Naive thymus-derived CD4-positive, alpha-beta T cell (primary cell): ENCODE measurements at regions of chr11 and their contacts with region 1.

Region 1: GRCh38 chr11:126062679-126063506 is at the start of gene CDON:
- DNase-seq: peak; percentile 88 to 97 (median 93)
- ATAC-seq: peak; percentile 92
- H3K4me3 ChIP-seq: peak within 1 kb of the TSS; percentile 83
- H3K4me3 Mint-ChIP-seq: peak within 1 kb of the TSS; percentile 79 to 93 (median 92)
- H3K27ac ChIP-seq: peak within 1 kb of the TSS; percentile 76
- H3K27ac Mint-ChIP-seq: peak within 1 kb of the TSS; percentile 79 to 98 (median 97)
- H3K4me1 ChIP-seq: peaks cover 4 to 5% of the 10 kb centered on the region in 2 donors
- H3K4me1 Mint-ChIP-seq: peaks cover 5 to 17% (median 7%) of the 10 kb centered on the region in 7 donors
- H3K27me3 ChIP-seq: no peaks in the 10 kb centered on the region
- H3K27me3 Mint-ChIP-seq: peaks cover 0 to 56% (median 5%) of the 10 kb centered on the region in 5 donors
- total RNA-seq, gene CDON: 1.5 to 4.8 (median 2.3) TPM

Region 2: GRCh38 chr11:124622531-124623451 is 1440.1 kb before region 1 on chr11 and contains the start of gene TBRG1:
- CTCF ChIA-PET with region 1: no interaction called
- POLR2A ChIA-PET with region 1: no interaction called
- intact Hi-C with region 1: loop called (anchors 1 to 5 kb)
- DNase-seq: peak; percentile 58 to 87 (median 81)
- ATAC-seq: peak; percentile 96
- H3K4me3 ChIP-seq: peak within 1 kb of the TSS; percentile 75
- H3K4me3 Mint-ChIP-seq: peak within 1 kb of the TSS; percentile 89 to 100 (median 98)
- H3K27ac ChIP-seq: peak within 1 kb of the TSS; percentile 91
- H3K27ac Mint-ChIP-seq: peak within 1 kb of the TSS; percentile 91 to 100 (median 98)
- H3K4me1 ChIP-seq: peaks cover 7 to 12% of the 10 kb centered on the region in 2 donors
- H3K4me1 Mint-ChIP-seq: peaks cover 21 to 52% (median 46%) of the 10 kb centered on the region in 7 donors
- H3K27me3 ChIP-seq: no peaks in the 10 kb centered on the region
- H3K27me3 Mint-ChIP-seq: peaks cover 0 to 23% (median 7%) of the 10 kb centered on the region in 5 donors
- total RNA-seq, gene TBRG1: 35.5 to 78.6 (median 63.9) TPM

Region 3: DNA sequence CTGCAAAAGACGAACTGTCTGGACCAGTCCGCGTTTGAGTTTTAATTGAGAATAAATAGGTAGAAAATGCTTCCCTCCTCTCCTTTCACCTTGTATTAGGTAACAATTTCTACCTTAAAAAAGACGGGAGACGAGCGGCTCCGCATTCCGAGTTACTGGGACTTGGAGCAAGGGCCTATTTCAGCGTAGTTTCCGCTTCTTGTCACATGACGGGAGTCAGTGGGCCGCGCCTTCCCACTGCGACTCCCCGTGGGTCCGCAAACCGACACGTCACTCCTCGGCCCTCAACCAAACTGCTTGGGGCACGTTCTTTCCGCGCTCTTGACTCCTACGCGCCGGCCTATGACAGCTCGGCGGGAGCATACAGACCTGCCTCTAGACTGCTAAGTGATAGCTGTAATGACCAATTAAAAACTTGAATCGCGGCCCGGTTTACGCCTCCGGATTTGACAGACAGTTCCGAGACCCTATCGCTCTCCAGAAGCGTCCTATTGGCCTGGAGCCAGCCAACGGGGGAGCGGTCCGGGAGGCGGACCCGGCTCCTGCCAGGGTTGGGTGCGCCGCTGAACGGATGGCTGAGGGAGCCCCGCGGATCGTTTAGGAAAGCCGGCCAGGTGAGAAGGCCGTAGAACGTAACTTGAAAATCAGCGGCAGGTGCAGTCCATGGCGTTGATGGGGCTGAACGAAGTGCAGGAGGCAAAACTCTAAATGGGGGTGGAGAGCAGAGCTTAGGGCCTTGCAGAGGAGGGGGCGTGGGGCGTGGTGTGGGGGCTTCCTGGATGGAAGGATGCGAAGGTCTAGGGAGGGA is 470.4 kb before region 1 on chr11 and contains the start of gene STT3A:
- CTCF ChIA-PET with region 1: no interaction called
- POLR2A ChIA-PET with region 1: no interaction called
- intact Hi-C with region 1: loop called (anchors 1 kb)
- DNase-seq: peak; percentile 94 to 99 (median 99)
- ATAC-seq: peak; percentile 96
- H3K4me3 ChIP-seq: peak within 1 kb of the TSS; percentile 94
- H3K4me3 Mint-ChIP-seq: peak within 1 kb of the TSS; percentile 88 to 99 (median 96)
- H3K27ac ChIP-seq: peak within 1 kb of the TSS; percentile 95
- H3K27ac Mint-ChIP-seq: peak within 1 kb of the TSS; percentile 94 to 100 (median 99)
- H3K4me1 ChIP-seq: peaks cover 13% of the 10 kb centered on the region in 2 donors
- H3K4me1 Mint-ChIP-seq: peaks cover 30 to 62% (median 53%) of the 10 kb centered on the region in 7 donors
- H3K27me3 ChIP-seq: no peaks in the 10 kb centered on the region
- H3K27me3 Mint-ChIP-seq: no peaks in the 10 kb centered on the region
- total RNA-seq, gene STT3A: 39.6 to 153 (median 84.5) TPM

Region 4: GRCh38 chr11:125902927-125903710 is 159.8 kb before region 1 on chr11 and contains the start of gene PUS3:
- CTCF ChIA-PET with region 1: no interaction called
- POLR2A ChIA-PET with region 1: no interaction called
- intact Hi-C with region 1: loop called (anchors 1 kb)
- DNase-seq: peak; percentile 73 to 88 (median 83)
- ATAC-seq: peak; percentile 96
- H3K4me3 ChIP-seq: peak within 1 kb of the TSS; percentile 91
- H3K4me3 Mint-ChIP-seq: peak within 1 kb of the TSS; percentile 82 to 98 (median 96)
- H3K27ac ChIP-seq: peak within 1 kb of the TSS; percentile 86
- H3K27ac Mint-ChIP-seq: peak within 1 kb of the TSS; percentile 83 to 96 (median 92)
- H3K4me1 ChIP-seq: peaks cover 7 to 13% of the 10 kb centered on the region in 2 donors
- H3K4me1 Mint-ChIP-seq: peaks cover 21 to 54% (median 39%) of the 10 kb centered on the region in 7 donors
- H3K27me3 ChIP-seq: peaks cover 0 to 4% of the 10 kb centered on the region in 2 donors
- H3K27me3 Mint-ChIP-seq: peaks cover 18 to 40% (median 29%) of the 10 kb centered on the region in 5 donors
- total RNA-seq, gene PUS3: 4.6 to 15.3 (median 9.3) TPM

Region 5: GRCh38 chr11:126080161-126080941 is 17.5 kb after region 1 on chr11:
- CTCF ChIA-PET with region 1: interaction called, 5 read pairs
- POLR2A ChIA-PET with region 1: interaction called, 21 read pairs
- intact Hi-C with region 1: loop called (anchors 1 kb)
- DNase-seq: no peak
- ATAC-seq: no peak
- H3K4me3 ChIP-seq: no peak overlapping the region
- H3K4me3 Mint-ChIP-seq: no peak overlapping the region
- H3K27ac ChIP-seq: no peak overlapping the region
- H3K27ac Mint-ChIP-seq: peak overlapping the region in 1 of 9 donors; percentile 6
- H3K4me1 ChIP-seq: peaks cover 11 to 25% of the 10 kb centered on the region in 2 donors
- H3K4me1 Mint-ChIP-seq: peaks cover 16 to 27% (median 23%) of the 10 kb centered on the region in 7 donors
- H3K27me3 ChIP-seq: no peaks in the 10 kb centered on the region
- H3K27me3 Mint-ChIP-seq: no peaks in the 10 kb centered on the region

Region 6: GRCh38 chr11:126095745-126096144 is 32.9 kb after region 1 on chr11:
- CTCF ChIA-PET with region 1: no interaction called
- POLR2A ChIA-PET with region 1: no interaction called
- intact Hi-C with region 1: no loop called
- DNase-seq: no peak
- ATAC-seq: no peak
- H3K4me3 ChIP-seq: no peak overlapping the region
- H3K4me3 Mint-ChIP-seq: no peak overlapping the region
- H3K27ac ChIP-seq: no peak overlapping the region
- H3K27ac Mint-ChIP-seq: no peak overlapping the region
- H3K4me1 ChIP-seq: no peaks in the 10 kb centered on the region
- H3K4me1 Mint-ChIP-seq: peaks cover 0 to 2% (median 0%) of the 10 kb centered on the region in 7 donors
- H3K27me3 ChIP-seq: no peaks in the 10 kb centered on the region
- H3K27me3 Mint-ChIP-seq: peaks cover 0 to 11% (median 0%) of the 10 kb centered on the region in 5 donors

Region 7: DNA sequence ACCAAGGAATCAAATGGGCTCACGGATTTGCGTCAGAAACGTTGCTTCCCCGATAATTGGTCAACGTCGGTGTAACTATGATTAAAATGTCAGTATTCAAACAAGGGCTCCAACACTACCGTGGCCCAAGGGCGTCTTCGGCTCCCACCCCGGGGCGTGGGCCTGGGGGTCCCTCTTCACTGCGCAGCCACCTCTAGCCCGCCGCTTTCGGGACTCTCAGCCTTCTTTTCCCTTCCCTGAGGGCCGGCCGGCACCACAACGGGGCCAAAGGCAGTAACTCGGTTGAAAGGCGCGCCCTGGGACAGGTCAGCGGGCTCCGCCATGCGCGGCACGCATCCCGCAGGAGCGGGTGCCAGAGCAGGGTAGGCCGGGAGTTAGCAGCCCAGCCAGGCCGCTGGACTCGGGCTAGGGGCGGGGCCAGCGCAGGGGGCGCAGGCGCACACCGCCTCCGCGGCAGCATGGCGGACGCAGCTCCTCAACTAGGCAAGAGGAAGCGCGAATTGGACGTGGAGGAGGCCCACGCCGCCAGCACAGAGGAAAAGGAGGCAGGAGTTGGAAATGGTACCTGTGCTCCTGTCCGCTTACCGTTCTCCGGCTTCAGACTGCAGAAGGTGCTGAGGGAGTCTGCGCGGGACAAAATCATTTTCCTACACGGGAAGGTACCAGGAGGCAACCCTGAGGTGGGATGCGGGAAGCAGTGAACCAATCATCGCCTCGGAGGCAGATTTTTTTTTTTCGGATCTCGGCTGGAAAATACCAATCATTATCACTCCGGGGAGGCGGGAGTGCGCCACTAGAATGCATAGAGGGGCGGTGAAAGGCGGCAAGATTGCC is 240.9 kb after region 1 on chr11 and contains the start of gene DCPS:
- CTCF ChIA-PET with region 1: no interaction called
- POLR2A ChIA-PET with region 1: no interaction called
- intact Hi-C with region 1: loop called in 1 of 2 experiments (anchors 1 kb)
- DNase-seq: peak; percentile 78 to 94 (median 86)
- ATAC-seq: peak; percentile 99
- H3K4me3 ChIP-seq: peak within 1 kb of the TSS; percentile 100
- H3K4me3 Mint-ChIP-seq: peak within 1 kb of the TSS; percentile 91 to 99 (median 97)
- H3K27ac ChIP-seq: peak within 1 kb of the TSS; percentile 97
- H3K27ac Mint-ChIP-seq: peak within 1 kb of the TSS; percentile 87 to 99 (median 96)
- H3K4me1 ChIP-seq: peaks cover 18 to 20% of the 10 kb centered on the region in 2 donors
- H3K4me1 Mint-ChIP-seq: peaks cover 19 to 50% (median 45%) of the 10 kb centered on the region in 7 donors
- H3K27me3 ChIP-seq: no peaks in the 10 kb centered on the region
- H3K27me3 Mint-ChIP-seq: no peaks in the 10 kb centered on the region
- total RNA-seq, gene DCPS: 11.0 to 37.2 (median 17.4) TPM

Region 8: GRCh38 chr11:126318574-126319373 is 255.9 kb after region 1 on chr11:
- CTCF ChIA-PET with region 1: no interaction called
- POLR2A ChIA-PET with region 1: no interaction called
- intact Hi-C with region 1: no loop called
- DNase-seq: peak in 2 of 9 donors; percentile 21 to 27
- ATAC-seq: peak; percentile 79
- H3K4me3 ChIP-seq: peak overlapping the region; percentile 38
- H3K4me3 Mint-ChIP-seq: peak overlapping the region; percentile 55 to 77 (median 62)
- H3K27ac ChIP-seq: peak overlapping the region; percentile 62
- H3K27ac Mint-ChIP-seq: peak overlapping the region; percentile 7 to 92 (median 87)
- H3K4me1 ChIP-seq: peaks cover 24 to 25% of the 10 kb centered on the region in 2 donors
- H3K4me1 Mint-ChIP-seq: peaks cover 39 to 50% (median 42%) of the 10 kb centered on the region in 7 donors
- H3K27me3 ChIP-seq: no peaks in the 10 kb centered on the region
- H3K27me3 Mint-ChIP-seq: no peaks in the 10 kb centered on the region